GM18951 (cell line): ENCODE measurements at regions of chr3 and their contacts with region 1.

Region 1: DNA sequence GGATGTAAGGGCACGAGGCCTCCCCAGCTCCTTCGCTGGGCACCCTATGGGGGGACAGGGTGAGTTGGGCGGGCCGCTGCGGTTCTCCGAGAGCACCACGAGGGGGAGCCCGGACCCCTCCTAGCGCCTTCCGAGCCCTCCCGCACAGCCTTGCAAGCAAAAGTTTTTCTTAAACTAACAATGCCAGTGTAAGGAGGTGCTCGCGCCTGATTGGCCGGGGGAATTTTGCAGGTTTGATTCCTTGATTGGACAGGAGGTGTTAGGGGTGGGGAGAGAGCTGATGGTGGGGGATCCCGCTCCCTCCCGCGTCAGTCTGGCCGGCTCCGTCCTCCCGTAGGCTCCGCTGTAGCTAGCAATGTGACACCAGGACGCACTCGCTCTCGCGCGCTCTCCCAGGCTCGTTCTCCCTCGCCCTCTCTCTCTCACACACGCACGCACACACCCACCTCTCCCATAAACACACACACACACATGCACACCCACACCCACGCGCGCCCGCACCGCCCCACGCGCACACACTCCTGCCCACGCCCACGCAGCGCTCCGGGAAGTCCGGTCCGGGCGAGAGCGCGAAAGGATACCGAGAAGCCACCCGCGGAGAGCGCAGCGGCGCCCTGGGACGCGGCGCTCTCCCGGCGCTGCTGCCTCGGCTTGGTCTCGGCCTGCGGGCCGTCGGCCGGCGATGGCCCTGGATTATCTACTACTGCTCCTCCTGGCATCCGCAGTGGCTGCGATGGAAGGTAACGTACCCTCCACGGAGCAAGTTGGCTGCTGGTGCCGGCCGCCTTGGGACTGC is at the start of gene EPHB1:
- POLR2A ChIP-seq: peak; percentile 87

Region 2: GRCh38 chr3:135503760-135504686 is 708.9 kb after region 1 on chr3:
- in situ Hi-C with region 1: loop called (anchors 25 kb)
- POLR2A ChIP-seq: no peak

Region 3: DNA sequence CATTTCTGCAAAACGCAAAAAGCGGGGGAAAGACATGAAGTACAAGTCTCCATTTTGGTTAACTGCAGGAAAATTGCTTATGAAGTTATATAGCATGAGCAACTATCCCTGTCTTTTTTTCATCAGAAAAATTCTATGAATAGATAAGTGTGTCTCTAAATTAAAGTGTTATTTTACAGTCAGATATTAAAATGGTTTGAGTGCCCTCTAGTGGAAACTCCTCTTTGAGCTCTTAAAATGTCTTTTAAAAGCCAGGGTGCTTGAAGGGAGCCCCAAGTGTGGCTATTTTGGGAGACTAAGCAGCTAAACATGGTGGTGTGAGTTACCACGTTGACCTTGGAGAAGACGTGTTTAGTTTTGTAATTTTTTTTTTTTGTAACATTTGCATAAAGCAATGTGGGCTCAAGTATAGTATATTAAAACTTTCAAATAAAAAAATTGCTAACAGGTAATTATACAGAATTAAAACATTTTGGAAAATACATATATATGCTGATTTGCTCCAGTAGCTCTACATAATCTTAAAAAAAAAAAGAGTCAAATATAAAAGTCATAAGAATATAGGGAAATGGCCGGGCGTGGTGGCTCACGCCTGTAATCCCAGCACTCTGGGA is 1247.6 kb after region 1 on chr3:
- in situ Hi-C with region 1: loop called (anchors 25 kb)
- POLR2A ChIP-seq: no peak